ENCODE measurements at regions of chr5 and their contacts with region 1.

Region 1: GRCh38 chr5:77143998-77144836 is 57.1 kb upstream of the ZBED3 start:
- DNase-seq: peak; percentile 55
- ATAC-seq: peak; percentile 71
- H3K4me3 ChIP-seq: no peak overlapping the region
- H3K4me3 Mint-ChIP-seq: no peak overlapping the region
- H3K27ac ChIP-seq: no peak overlapping the region
- H3K27ac Mint-ChIP-seq: no peak overlapping the region
- H3K4me1 ChIP-seq: no peaks in the 10 kb centered on the region
- H3K4me1 Mint-ChIP-seq: no peaks in the 10 kb centered on the region
- H3K27me3 ChIP-seq: peaks cover 0 to 2% (median 0%) of the 10 kb centered on the region in 4 experiments
- H3K27me3 Mint-ChIP-seq: peaks cover 2% of the 10 kb centered on the region
- CTCF ChIP-seq: peak; percentile 81

Region 2: GRCh38 chr5:76867827-76868693 is 276.2 kb before region 1 on chr5:
- CTCF ChIA-PET with region 1: no interaction called
- POLR2A ChIA-PET with region 1: no interaction called
- intact Hi-C with region 1: loop called (anchors 10 kb)
- DNase-seq: peak; percentile 70
- ATAC-seq: peak; percentile 74
- H3K4me3 ChIP-seq: no peak overlapping the region
- H3K4me3 Mint-ChIP-seq: no peak overlapping the region
- H3K27ac ChIP-seq: no peak overlapping the region
- H3K27ac Mint-ChIP-seq: no peak overlapping the region
- H3K4me1 ChIP-seq: peaks cover 0 to 2% of the 10 kb centered on the region in 2 donors
- H3K4me1 Mint-ChIP-seq: no peaks in the 10 kb centered on the region
- H3K27me3 ChIP-seq: no peaks in the 10 kb centered on the region
- H3K27me3 Mint-ChIP-seq: no peaks in the 10 kb centered on the region
- CTCF ChIP-seq: peak; percentile 71

Region 3: GRCh38 chr5:77230721-77231470 is 86.7 kb after region 1 on chr5:
- CTCF ChIA-PET with region 1: no interaction called
- POLR2A ChIA-PET with region 1: no interaction called
- intact Hi-C with region 1: no loop called
- DNase-seq: no peak
- ATAC-seq: no peak
- H3K4me3 ChIP-seq: no peak overlapping the region
- H3K4me3 Mint-ChIP-seq: peak overlapping the region; percentile 57
- H3K27ac ChIP-seq: no peak overlapping the region
- H3K27ac Mint-ChIP-seq: no peak overlapping the region
- H3K4me1 ChIP-seq: peaks cover 3 to 4% of the 10 kb centered on the region in 2 donors
- H3K4me1 Mint-ChIP-seq: peaks cover 7% of the 10 kb centered on the region
- H3K27me3 ChIP-seq: peaks cover 0 to 8% (median 1%) of the 10 kb centered on the region in 4 experiments
- H3K27me3 Mint-ChIP-seq: peaks cover 3% of the 10 kb centered on the region
- CTCF ChIP-seq: no peak

Region 4: GRCh38 chr5:77437194-77437593 is 293.0 kb after region 1 on chr5:
- CTCF ChIA-PET with region 1: no interaction called
- POLR2A ChIA-PET with region 1: no interaction called
- intact Hi-C with region 1: loop called (anchors 10 kb)
- DNase-seq: no peak
- ATAC-seq: no peak
- H3K4me3 ChIP-seq: no peak overlapping the region
- H3K4me3 Mint-ChIP-seq: no peak overlapping the region
- H3K27ac ChIP-seq: no peak overlapping the region
- H3K27ac Mint-ChIP-seq: no peak overlapping the region
- H3K4me1 ChIP-seq: no peaks in the 10 kb centered on the region
- H3K4me1 Mint-ChIP-seq: no peaks in the 10 kb centered on the region
- H3K27me3 ChIP-seq: no peaks in the 10 kb centered on the region
- H3K27me3 Mint-ChIP-seq: no peaks in the 10 kb centered on the region
- CTCF ChIP-seq: no peak

Measured in B cell (primary cell).